Stomach (tissue), 19 donors: ENCODE measurements at regions of chr3 and their contacts with region 1.

Region 1: DNA sequence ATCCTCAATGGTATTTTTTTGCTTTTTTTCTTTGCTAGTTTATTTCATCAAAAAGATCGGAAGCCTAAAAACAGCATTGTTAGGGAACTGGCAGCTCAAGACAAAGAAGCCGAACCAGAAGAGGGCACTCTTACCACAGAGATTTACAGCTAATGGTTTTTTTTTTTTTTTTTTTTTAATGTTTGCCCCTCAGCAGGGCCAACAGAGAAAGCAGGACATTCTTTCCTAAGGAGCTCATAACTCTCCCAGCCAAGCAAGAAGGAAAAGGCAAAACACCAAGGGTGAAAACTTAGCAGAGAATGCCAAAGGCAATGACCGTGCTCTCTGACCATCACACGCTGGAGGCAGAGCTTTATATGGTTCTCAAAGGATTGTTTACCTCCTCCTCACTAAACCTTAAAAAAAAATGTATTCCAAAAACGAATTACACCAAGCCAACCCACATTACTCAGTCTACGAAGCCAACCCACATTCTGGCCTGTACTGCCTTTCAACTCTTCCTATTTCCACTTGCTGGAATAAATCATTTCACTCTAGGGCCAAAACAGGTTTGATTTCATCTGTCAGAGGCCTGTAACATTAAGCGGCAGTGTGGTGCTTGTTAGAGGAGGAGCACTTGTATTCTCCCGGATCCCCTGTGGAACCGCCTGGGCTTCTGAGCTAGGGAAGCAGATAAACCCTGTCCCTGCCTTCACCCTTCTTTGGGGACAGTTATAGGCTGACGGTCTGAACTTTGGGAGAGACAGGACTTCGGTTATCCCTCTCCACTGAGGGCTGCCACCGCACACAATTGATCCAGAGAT is 35.6 kb upstream of the GYG1 start:
- DNase-seq: peak; percentile 39 to 88
- H3K4me3 ChIP-seq: no peak overlapping the region
- H3K27ac ChIP-seq: peak overlapping the region; percentile 7 to 89 (median 78)
- H3K4me1 ChIP-seq: peaks cover 0 to 20% (median 5%) of the 10 kb centered on the region in 4 donors
- H3K27me3 ChIP-seq: no peaks in the 10 kb centered on the region
- CTCF ChIP-seq: peak in 5 of 7 experiments; percentile 32 to 61 (median 38)
- EP300 ChIP-seq: no peak
- POLR2A ChIP-seq: no peak

Region 2: DNA sequence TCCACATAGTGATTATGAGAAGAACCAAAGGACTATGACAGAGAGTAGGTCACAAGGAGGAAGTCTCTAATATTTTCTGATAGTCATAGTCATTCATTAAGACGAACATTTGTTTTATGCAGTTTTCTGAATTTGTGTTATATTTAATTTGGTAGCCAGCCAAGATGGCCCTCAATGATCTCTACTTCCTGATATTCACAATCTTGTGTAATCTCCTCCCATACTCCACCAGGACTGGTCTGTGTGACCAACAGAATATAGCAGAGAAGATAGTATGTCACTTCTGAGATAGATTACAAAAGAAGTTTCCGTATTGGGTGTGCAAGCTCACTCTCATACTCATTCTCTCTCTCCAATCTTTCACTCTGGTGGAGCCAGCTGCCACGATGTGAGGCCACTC is 99.8 kb after region 1 on chr3:
- intact Hi-C with region 1: no loop called
- DNase-seq: no peak
- H3K4me3 ChIP-seq: no peak overlapping the region
- H3K27ac ChIP-seq: no peak overlapping the region
- H3K4me1 ChIP-seq: no peaks in the 10 kb centered on the region
- H3K27me3 ChIP-seq: no peaks in the 10 kb centered on the region
- CTCF ChIP-seq: no peak
- EP300 ChIP-seq: no peak
- POLR2A ChIP-seq: no peak

Region 3: DNA sequence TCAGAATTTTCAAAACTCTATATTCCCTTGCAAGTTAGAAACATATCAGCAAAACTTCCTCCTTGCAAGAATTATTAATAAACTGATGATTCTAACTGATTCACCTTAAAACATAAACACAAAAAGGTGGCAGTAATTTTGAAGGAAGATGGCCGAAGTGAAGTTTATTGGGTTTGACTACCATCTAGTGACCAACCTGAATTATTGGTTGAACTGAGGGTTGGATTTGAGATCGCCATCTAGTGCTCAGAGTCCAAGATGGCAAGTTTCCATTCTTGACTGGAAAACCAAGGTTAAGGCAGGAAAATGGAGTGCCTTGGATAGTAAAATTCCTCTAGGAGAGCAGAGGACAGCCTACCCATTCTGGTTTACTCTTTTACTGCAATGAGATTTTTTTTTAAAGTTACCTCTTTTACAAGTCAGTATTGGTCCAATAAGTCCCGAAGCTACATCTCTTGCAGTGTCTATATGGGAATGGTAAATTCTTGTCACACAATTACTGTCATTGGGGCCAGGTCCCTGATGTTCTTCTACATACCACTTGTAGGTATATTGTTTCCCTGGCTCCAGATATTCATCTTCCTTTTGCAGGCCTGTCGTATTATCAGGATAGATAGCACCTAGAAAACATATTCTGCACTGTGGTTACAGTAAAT is 317.5 kb after region 1 on chr3:
- intact Hi-C with region 1: loop called (anchors 10 kb)
- DNase-seq: peak; percentile 40 to 91
- H3K4me3 ChIP-seq: no peak overlapping the region
- H3K27ac ChIP-seq: peak overlapping the region in 1 of 5 donors; percentile 0
- H3K4me1 ChIP-seq: peaks cover 7 to 35% (median 23%) of the 10 kb centered on the region in 4 donors
- H3K27me3 ChIP-seq: no peaks in the 10 kb centered on the region
- CTCF ChIP-seq: peak in 6 of 7 experiments; percentile 18 to 99 (median 86)
- EP300 ChIP-seq: no peak
- POLR2A ChIP-seq: no peak